Breast epithelium (tissue), 4 donors: ENCODE measurements at regions of chr13 and their contacts with region 1.

Region 1: GRCh38 chr13:44410346-44410859 is 36.8 kb downstream of the SERP2 start:
- DNase-seq: no peak
- H3K4me3 ChIP-seq: no peak overlapping the region
- H3K27ac ChIP-seq: no peak overlapping the region
- H3K4me1 ChIP-seq: no peaks in the 10 kb centered on the region
- H3K27me3 ChIP-seq: no peaks in the 10 kb centered on the region
- CTCF ChIP-seq: peak in 1 of 3 donors; percentile 10
- POLR2A ChIP-seq: no peak

Region 2: DNA sequence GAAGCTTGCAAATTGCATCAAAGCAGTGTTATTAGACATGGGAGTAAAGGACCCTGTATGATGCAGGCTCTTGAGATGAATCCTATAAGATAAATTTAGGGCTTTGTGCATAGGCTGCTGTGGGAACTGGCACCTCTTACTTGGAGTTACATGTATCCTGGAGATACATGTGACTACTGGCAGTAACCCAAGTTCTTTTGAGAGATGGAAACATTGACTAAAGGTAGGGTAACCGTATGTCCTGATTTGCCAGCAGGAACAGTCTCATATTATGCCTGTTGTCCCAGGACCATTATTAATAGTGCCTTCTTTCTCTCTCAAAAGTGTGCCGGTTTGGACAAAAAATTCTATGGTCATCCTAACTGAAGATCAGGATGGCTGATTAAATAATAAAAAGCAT is 335.3 kb before region 1 on chr13:
- intact Hi-C with region 1: no loop called
- DNase-seq: no peak
- H3K4me3 ChIP-seq: no peak overlapping the region
- H3K27ac ChIP-seq: no peak overlapping the region
- H3K4me1 ChIP-seq: no peaks in the 10 kb centered on the region
- H3K27me3 ChIP-seq: no peaks in the 10 kb centered on the region
- CTCF ChIP-seq: no peak
- POLR2A ChIP-seq: no peak

Region 3: DNA sequence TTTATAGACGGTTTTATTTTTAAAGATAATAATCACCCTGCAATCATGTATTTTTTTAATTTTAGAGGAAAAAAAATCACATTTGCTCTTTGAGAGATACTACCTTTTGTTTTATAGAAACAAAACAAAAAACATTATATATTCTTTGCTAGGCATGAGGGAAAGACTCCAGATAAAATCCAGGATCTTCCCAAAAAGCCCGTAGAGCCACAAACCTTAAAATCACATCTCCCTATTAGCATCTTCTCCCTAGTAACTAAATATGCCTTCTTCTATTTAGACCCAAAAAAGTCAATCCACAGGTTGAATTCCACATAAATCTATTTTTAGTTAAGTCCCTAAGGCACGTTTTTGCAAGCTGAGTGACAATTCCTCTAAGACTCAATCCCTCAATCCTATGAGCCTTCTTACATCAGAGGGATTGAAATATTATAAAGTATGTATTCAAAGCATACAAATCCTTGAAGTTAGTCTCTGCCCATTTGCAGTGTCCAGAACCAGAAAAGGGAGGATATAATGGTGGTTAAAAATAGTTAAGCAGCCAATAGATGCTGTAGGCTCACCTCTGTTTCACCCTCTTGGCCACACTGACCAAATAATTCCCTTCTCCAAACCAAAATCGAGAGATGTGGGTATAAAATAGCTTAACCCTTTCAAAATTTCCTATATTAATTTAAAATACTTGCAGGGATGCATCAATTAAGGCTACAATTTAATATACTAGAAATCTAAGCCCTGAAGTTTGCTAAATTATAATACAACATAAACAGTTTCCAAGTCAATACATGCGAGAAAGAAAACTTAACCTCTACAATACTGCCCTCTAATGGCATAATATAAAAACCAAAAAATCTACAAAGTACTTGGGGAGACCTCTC is 27.2 kb after region 1 on chr13:
- intact Hi-C with region 1: loop called (anchors 2 kb)
- DNase-seq: no peak
- H3K4me3 ChIP-seq: peak overlapping the region; percentile 58 to 84 (median 81)
- H3K27ac ChIP-seq: peak overlapping the region; percentile 98 to 99
- H3K4me1 ChIP-seq: no peaks in the 10 kb centered on the region
- H3K27me3 ChIP-seq: no peaks in the 10 kb centered on the region
- CTCF ChIP-seq: peak; percentile 38 to 67 (median 65)
- POLR2A ChIP-seq: no peak